Common myeloid progenitor, CD34-positive (primary cell): ENCODE measurements at regions of chr22 and their contacts with region 1.

Region 1: DNA sequence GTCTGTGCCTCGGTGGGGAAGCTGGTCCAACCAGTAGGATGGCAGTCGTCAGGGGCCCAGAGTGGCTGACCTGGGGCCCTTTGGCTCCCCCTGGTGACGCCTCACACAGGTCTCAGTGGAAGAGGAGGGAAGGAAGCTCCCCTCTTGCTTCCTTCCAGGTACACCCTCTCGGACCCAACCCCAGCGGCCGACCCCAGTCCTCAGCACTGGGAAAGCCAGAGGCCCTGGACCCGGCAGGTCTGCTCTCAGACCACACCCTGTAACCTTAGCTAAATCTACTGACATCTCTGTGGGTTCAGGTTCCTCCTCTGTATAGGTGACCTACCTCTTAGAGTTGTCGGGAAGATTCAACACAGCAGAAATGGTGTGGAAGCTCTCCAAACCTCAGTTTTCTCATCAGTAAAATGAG is 3.4 kb upstream of the SCUBE1 start:
- DNase-seq: peak; percentile 50 to 59 (median 54)
- H3K4me3 ChIP-seq: no peak overlapping the region
- H3K27ac ChIP-seq: no peak overlapping the region
- H3K4me1 ChIP-seq: peaks cover 0 to 30% (median 14%) of the 10 kb centered on the region in 4 experiments
- H3K27me3 ChIP-seq: peaks cover 0 to 25% (median 14%) of the 10 kb centered on the region in 5 experiments

Region 2: GRCh38 chr22:43203471-43203981 is 143.0 kb before region 1 on chr22:
- CTCF ChIA-PET with region 1: no interaction called
- POLR2A ChIA-PET with region 1: no interaction called
- DNase-seq: no peak
- H3K4me3 ChIP-seq: no peak overlapping the region
- H3K27ac ChIP-seq: no peak overlapping the region
- H3K4me1 ChIP-seq: peaks cover 0 to 12% (median 5%) of the 10 kb centered on the region in 4 experiments
- H3K27me3 ChIP-seq: no peaks in the 10 kb centered on the region

Region 3: GRCh38 chr22:43230971-43231723 is 115.4 kb before region 1 on chr22:
- CTCF ChIA-PET with region 1: interaction called, 93 read pairs
- POLR2A ChIA-PET with region 1: interaction called, 4 read pairs
- DNase-seq: peak; percentile 71 to 82 (median 80)
- H3K4me3 ChIP-seq: peak overlapping the region in 2 of 7 experiments; percentile 10 to 36
- H3K27ac ChIP-seq: no peak overlapping the region
- H3K4me1 ChIP-seq: peaks cover 0 to 21% (median 15%) of the 10 kb centered on the region in 4 experiments
- H3K27me3 ChIP-seq: peaks cover 0 to 2% (median 0%) of the 10 kb centered on the region in 5 experiments

Region 4: DNA sequence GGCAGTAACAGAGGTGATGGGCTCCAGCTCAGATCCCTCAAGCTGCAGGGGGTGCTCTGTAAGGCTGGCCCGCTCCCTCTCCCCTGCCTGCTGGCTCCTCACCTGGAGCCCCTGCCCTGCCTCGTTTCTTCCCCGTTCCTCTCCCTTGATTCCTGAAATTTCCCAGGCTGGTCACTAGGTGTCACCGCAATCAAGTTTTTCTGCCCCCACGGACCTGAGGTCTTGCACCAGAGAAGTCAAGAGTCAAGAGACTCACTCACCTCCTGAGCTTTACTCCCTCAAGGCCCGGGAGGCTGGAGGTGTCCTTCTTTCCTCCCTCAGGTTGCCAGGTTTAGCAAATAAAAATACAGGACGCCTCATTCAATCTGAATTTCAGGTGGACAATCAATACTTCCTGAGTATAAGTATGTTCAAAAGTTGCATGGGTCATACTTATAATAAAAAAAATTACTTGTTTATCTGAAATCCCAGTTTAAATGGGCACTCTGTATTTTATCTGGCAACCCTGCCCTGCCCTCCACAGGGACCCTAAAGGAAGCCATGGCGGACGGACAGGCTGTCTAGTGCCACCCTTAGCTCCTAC is 72.5 kb before region 1 on chr22:
- CTCF ChIA-PET with region 1: interaction called, 141 read pairs
- POLR2A ChIA-PET with region 1: interaction called, 7 read pairs
- DNase-seq: peak; percentile 65 to 75 (median 73)
- H3K4me3 ChIP-seq: no peak overlapping the region
- H3K27ac ChIP-seq: no peak overlapping the region
- H3K4me1 ChIP-seq: peaks cover 0 to 13% (median 6%) of the 10 kb centered on the region in 4 experiments
- H3K27me3 ChIP-seq: no peaks in the 10 kb centered on the region

Region 5: GRCh38 chr22:43333978-43334377 is 12.5 kb before region 1 on chr22:
- CTCF ChIA-PET with region 1: interaction called, 15 read pairs
- POLR2A ChIA-PET with region 1: no interaction called
- DNase-seq: no peak
- H3K4me3 ChIP-seq: no peak overlapping the region
- H3K27ac ChIP-seq: no peak overlapping the region
- H3K4me1 ChIP-seq: peaks cover 5 to 16% (median 11%) of the 10 kb centered on the region in 4 experiments
- H3K27me3 ChIP-seq: peaks cover 0 to 3% (median 0%) of the 10 kb centered on the region in 5 experiments

Region 6: DNA sequence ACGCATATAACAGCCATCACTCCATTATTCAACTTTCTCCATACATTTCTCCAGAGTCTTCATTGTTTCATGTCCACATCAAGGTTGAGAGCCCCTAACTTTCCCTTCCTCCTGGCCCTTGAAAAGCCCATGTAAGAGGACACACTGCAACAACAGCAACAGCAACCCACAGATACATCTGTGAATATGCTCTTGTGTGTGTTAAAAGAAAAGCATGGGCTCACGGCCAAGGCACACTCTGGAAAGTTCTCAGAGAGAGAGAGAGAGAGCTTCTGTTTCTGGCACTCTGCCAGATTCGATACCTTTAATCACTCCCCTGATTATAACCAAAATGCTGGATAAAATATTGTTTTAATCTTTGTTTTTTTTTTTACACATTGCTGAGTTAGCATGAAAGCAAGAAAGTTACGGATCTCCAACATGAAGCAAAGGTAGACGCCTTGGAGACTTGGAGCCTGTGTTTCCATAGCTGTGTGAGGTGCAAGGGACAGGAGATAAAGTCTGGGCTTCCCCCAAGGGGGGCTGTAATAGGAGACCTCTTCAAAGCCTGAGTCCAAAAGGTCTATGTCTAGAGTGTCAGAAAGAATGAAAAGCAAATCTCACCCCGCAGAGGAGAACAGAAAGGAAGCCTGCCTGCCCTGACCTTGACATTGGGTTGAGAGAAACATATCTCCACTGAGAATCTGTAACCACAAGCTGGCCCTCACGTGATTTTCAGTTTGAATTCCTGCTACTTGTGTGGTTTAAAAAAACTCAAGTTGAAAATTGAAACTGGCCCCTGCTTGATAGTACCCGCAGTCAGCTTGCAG is 31.6 kb after region 1 on chr22:
- CTCF ChIA-PET with region 1: interaction called, 24 read pairs
- POLR2A ChIA-PET with region 1: no interaction called
- DNase-seq: peak; percentile 63 to 90 (median 86)
- H3K4me3 ChIP-seq: peak overlapping the region in 3 of 7 experiments; percentile 4 to 54 (median 51)
- H3K27ac ChIP-seq: peak overlapping the region; percentile 23 to 50
- H3K4me1 ChIP-seq: peaks cover 15 to 48% (median 40%) of the 10 kb centered on the region in 4 experiments
- H3K27me3 ChIP-seq: no peaks in the 10 kb centered on the region

Region 7: GRCh38 chr22:43424666-43425630 is 78.4 kb after region 1 on chr22:
- CTCF ChIA-PET with region 1: no interaction called
- POLR2A ChIA-PET with region 1: no interaction called
- DNase-seq: no peak
- H3K4me3 ChIP-seq: no peak overlapping the region
- H3K27ac ChIP-seq: no peak overlapping the region
- H3K4me1 ChIP-seq: peaks cover 0 to 13% (median 6%) of the 10 kb centered on the region in 4 experiments
- H3K27me3 ChIP-seq: peaks cover 0 to 13% (median 0%) of the 10 kb centered on the region in 5 experiments